Left lung (tissue), 14 donors: ENCODE measurements at regions of chr3 and their contacts with region 1.

Region 1: DNA sequence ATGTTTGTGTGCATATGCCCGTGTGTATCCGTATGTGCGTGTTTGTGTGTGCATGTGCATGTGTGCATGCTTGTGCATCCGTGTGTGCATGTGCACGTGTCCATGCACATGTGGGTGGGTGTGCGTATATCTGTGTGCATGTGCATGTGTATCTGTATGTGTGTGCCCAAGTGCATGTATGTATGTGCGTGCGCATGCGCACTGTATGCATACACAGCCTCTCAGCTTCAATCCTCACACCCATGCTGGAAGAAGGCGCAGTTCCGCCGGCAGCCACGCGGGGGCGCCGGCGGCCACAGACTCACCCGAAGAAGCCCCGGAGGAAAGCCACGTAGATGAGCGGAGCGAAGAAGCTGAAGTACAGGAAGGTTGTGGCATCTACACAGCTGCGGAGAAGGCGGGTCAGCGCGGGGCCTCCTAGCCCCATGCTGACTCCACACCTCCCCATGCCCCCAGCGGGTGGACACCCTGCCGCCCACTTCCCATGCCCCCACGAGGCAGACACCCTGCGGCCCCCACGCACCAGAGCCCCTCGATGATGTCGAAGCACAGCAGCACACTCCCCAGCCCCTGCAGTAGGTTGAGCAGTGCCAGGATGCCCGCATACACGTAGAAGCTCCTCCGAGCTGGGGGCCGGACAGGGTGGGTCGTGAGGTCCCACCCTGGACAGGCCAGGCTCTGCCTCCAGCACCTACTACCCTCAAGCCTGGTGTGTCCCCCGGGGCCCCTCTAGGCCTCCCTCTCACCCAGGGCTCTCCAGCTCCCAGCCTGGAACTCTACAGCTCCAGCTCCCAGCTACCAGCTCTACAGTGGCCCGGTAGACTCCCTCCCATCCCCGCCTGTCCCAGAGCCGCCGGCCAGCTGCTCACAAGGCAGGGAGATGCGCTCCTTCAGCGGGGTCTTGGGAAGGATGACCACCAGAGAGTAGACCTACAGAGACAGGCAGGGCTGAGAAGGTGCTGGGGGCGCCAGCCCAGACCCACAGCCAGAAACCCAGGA is 15.4 kb downstream of the TPRA1 start:
- DNase-seq: peak; percentile 83 to 95 (median 88)
- ATAC-seq: peak; percentile 96
- H3K4me3 ChIP-seq: no peak overlapping the region
- H3K27ac ChIP-seq: no peak overlapping the region
- H3K4me1 ChIP-seq: peaks cover 0 to 15% of the 10 kb centered on the region in 2 donors
- H3K27me3 ChIP-seq: no peaks in the 10 kb centered on the region
- CTCF ChIP-seq: peak; percentile 94 to 98

Region 2: DNA sequence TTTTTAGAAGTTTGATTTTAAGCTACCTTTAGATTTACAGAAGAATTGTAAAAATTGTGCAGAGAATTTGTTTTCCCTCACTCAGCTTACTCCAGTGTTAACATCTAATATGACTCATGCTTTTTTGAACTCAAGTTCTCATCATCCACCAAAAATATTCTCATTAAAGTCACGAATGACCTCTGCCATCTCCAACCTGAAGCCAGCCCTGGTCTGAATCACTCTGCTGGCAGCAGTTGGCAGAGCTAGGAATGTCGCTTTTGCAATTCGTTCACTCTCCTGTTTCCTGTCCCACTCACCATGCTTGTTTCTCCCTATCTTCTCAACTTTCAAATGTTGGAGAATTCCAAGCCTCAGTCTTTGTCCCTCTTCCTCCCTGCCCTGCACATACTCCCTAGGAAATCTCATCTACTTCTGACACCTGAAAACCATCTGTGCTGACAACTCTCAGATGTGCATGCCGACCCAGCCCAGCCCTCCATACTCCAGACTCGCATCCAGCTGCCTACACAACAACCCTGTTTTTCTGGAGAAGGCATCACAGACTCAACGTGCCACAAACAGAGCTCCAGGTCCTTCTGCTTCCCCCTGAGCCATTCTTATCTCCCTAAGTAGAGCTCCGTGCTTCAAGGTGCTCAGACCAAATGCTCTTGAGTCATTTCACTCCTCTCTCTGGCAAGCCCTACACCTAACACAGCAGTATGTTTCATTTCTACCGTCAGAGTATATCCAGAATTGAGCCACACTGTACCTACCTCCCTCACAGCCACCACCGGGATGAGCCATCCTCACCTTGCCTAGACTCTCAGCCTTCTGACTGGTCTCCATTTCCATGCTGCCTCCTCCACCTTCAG is 357.4 kb before region 1 on chr3:
- intact Hi-C with region 1: no loop called
- DNase-seq: no peak
- ATAC-seq: no peak
- H3K4me3 ChIP-seq: no peak overlapping the region
- H3K27ac ChIP-seq: no peak overlapping the region
- H3K4me1 ChIP-seq: no peaks in the 10 kb centered on the region
- H3K27me3 ChIP-seq: peaks cover 0 to 25% of the 10 kb centered on the region in 2 donors
- CTCF ChIP-seq: no peak

Region 3: DNA sequence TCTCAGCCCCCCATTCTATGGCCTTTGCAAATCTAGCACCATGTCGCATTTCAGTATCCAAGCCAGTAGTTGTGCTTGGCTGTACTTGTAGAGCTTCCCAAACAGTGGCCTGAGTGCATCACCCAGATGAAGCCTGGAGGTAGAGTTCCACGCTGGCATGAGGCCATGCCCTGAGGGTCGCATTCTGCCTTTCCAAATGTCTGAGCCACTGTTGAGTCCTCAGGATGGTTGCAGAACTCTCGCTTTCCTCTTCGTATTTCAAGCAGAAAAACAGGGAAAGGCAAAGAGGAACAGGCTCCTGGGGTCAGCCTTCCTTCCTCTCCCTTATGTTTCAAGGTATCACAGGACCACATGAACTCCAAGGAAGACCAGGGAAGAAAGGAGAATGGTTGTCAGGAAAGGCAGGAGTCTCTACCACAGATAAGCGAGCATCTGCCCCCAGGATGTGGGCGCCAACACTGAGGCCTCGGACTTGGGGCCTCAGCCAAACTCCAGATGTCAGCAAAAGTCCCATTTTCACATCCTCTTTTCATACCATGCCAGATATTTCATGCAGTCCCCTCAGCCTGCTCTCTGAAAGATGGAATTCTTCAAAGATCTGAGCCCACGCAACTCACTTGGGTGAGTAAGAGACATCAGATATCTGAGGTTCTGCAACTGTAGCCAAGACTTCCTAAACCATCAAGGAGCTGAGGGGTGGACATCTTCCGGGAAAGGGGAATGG is 267.9 kb before region 1 on chr3:
- intact Hi-C with region 1: no loop called
- DNase-seq: no peak
- ATAC-seq: no peak
- H3K4me3 ChIP-seq: no peak overlapping the region
- H3K27ac ChIP-seq: no peak overlapping the region
- H3K4me1 ChIP-seq: peaks cover 0 to 10% of the 10 kb centered on the region in 2 donors
- H3K27me3 ChIP-seq: peaks cover 0 to 9% of the 10 kb centered on the region in 2 donors
- CTCF ChIP-seq: no peak

Region 4: GRCh38 chr3:127959846-127960245 is 384.7 kb after region 1 on chr3:
- intact Hi-C with region 1: loop called in 1 of 2 experiments (anchors 10 kb)
- DNase-seq: peak in 2 of 4 donors; percentile 42 to 78
- ATAC-seq: peak; percentile 69
- H3K4me3 ChIP-seq: no peak overlapping the region
- H3K27ac ChIP-seq: no peak overlapping the region
- H3K4me1 ChIP-seq: no peaks in the 10 kb centered on the region
- H3K27me3 ChIP-seq: no peaks in the 10 kb centered on the region
- CTCF ChIP-seq: peak; percentile 13 to 37